ENCODE measurements at regions of chr16 and their contacts with region 1.

Region 1: DNA sequence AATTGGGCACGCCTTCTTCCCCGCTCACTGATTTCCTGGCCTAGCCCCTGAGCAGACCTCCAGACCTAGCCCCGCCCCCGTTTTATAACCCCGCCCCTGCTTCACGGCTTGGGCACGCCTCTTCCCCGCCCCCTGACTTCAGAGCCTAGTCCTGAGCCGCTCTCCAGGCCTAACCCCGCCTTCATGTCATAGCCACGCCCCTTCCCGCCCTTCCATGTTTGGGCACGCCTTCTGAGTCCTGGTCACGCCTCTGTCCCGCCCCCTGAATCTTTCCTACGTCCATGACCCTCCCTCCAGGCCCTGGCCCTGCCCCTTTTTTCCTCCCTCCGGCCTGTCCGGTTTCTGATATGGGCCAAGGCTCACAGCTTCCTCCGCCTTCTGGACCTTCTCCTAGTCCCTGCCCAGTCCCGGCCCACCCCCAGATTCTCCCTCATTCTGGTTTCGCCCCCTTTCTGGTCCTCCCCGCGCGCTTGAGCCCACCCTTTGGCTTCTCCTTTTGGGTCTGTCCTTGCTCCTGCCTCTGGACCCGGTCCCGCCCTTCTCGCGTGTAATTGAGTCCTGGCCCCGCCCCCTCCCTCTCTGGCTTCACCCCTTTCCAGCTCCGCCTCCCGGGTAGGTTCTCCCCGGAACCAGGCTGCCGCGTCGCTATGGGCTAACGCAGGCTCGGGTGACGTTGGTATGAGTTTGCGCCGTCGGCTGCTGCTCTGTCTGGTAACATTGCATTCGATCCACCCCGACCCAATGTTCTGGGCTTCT is 15.1 kb upstream of the EEF2K start:
- DNase-seq: peak; percentile 100
- ATAC-seq: peak; percentile 78
- H3K4me3 Mint-ChIP-seq: peak overlapping the region; percentile 88
- H3K27ac Mint-ChIP-seq: peak overlapping the region; percentile 98
- H3K4me1 Mint-ChIP-seq: peaks cover 38% of the 10 kb centered on the region
- H3K27me3 Mint-ChIP-seq: peaks cover 18% of the 10 kb centered on the region
- CTCF ChIP-seq: no peak

Region 2: GRCh38 chr16:21989133-21989532 is 201.8 kb before region 1 on chr16:
- CTCF ChIA-PET with region 1: interaction called, 24 read pairs
- POLR2A ChIA-PET with region 1: no interaction called
- DNase-seq: no peak
- ATAC-seq: no peak
- H3K4me3 Mint-ChIP-seq: no peak overlapping the region
- H3K27ac Mint-ChIP-seq: no peak overlapping the region
- H3K4me1 Mint-ChIP-seq: peaks cover 5% of the 10 kb centered on the region; the same call in 1 of the 2 replicates
- H3K27me3 Mint-ChIP-seq: no peaks in the 10 kb centered on the region
- CTCF ChIP-seq: no peak

Region 3: GRCh38 chr16:22007509-22008214 is 183.3 kb before region 1 on chr16 and contains the start of gene MOSMO:
- CTCF ChIA-PET with region 1: interaction called, 38 read pairs
- POLR2A ChIA-PET with region 1: interaction called, 4 read pairs
- DNase-seq: peak; percentile 66
- ATAC-seq: peak; percentile 82
- H3K4me3 Mint-ChIP-seq: peak within 1 kb of the TSS; percentile 90
- H3K27ac Mint-ChIP-seq: peak within 1 kb of the TSS; percentile 21; the same call in 1 of the 2 replicates
- H3K4me1 Mint-ChIP-seq: peaks cover 12% of the 10 kb centered on the region
- H3K27me3 Mint-ChIP-seq: peaks cover 13% of the 10 kb centered on the region
- CTCF ChIP-seq: no peak
- total RNA-seq, gene MOSMO: 10.7 to 11.6 TPM (median 10.7 TPM) in 3 replicates

Region 4: GRCh38 chr16:22091758-22092600 is 99.0 kb before region 1 on chr16 and contains the start of gene VWA3A:
- CTCF ChIA-PET with region 1: interaction called, 15 read pairs
- POLR2A ChIA-PET with region 1: no interaction called
- DNase-seq: peak; percentile 57
- ATAC-seq: peak; percentile 91
- H3K4me3 Mint-ChIP-seq: peak within 1 kb of the TSS; percentile 18; the same call in 1 of the 2 replicates
- H3K27ac Mint-ChIP-seq: peak within 1 kb of the TSS; percentile 37; the same call in 1 of the 2 replicates
- H3K4me1 Mint-ChIP-seq: peaks cover 10% of the 10 kb centered on the region
- H3K27me3 Mint-ChIP-seq: no peaks in the 10 kb centered on the region; the same call in 1 of the 2 replicates
- CTCF ChIP-seq: no peak
- total RNA-seq, gene VWA3A: 0.11 TPM in 1 of 3 replicates, not detected in the others

Region 5: DNA sequence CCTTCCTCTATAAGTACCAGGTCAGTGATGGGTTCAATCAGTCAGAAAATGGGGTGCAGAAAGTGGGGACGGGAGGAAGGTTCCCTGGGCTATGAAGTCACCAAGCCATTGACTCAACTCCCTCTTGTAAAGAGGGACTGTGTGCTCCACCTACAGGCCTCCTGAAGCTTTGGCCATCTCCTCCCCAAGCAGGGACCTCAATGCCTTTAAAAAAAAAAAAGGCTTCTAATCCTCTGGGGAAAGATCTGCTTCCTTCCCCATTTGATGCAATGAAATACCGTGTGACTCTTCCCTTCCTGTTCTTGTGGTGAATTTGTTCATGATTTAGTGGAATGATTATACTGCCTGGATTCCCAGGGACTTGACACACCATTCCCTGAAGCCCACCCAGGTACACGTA is 67.8 kb before region 1 on chr16:
- CTCF ChIA-PET with region 1: interaction called, 20 read pairs
- POLR2A ChIA-PET with region 1: no interaction called
- DNase-seq: no peak
- ATAC-seq: peak; percentile 81
- H3K4me3 Mint-ChIP-seq: no peak overlapping the region
- H3K27ac Mint-ChIP-seq: no peak overlapping the region
- H3K4me1 Mint-ChIP-seq: no peaks in the 10 kb centered on the region
- H3K27me3 Mint-ChIP-seq: peaks cover 6% of the 10 kb centered on the region; the same call in 1 of the 2 replicates
- CTCF ChIP-seq: no peak

Region 6: DNA sequence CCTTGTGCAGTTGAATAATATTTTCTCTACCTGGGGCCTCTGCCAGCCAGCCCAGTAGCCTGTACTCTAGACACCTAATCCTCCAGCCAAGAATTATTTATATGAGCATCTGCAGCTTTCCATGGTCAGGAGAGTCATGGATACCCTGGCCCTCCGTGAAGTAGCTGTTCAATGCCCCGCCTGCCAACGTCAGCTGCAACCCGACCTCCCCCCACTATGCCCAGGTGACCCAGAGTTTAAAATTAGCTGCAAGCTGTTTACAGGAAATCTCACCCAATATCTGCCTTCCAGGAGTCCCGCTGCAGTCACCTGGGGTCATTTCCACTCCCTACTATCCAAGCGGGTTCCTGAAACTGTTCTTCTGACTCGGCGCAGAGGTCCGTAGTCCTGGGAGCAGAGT is 16.3 kb before region 1 on chr16:
- CTCF ChIA-PET with region 1: interaction called, 26 read pairs
- POLR2A ChIA-PET with region 1: no interaction called
- DNase-seq: no peak
- ATAC-seq: no peak
- H3K4me3 Mint-ChIP-seq: no peak overlapping the region
- H3K27ac Mint-ChIP-seq: no peak overlapping the region
- H3K4me1 Mint-ChIP-seq: no peaks in the 10 kb centered on the region
- H3K27me3 Mint-ChIP-seq: no peaks in the 10 kb centered on the region
- CTCF ChIP-seq: no peak

Region 7: DNA sequence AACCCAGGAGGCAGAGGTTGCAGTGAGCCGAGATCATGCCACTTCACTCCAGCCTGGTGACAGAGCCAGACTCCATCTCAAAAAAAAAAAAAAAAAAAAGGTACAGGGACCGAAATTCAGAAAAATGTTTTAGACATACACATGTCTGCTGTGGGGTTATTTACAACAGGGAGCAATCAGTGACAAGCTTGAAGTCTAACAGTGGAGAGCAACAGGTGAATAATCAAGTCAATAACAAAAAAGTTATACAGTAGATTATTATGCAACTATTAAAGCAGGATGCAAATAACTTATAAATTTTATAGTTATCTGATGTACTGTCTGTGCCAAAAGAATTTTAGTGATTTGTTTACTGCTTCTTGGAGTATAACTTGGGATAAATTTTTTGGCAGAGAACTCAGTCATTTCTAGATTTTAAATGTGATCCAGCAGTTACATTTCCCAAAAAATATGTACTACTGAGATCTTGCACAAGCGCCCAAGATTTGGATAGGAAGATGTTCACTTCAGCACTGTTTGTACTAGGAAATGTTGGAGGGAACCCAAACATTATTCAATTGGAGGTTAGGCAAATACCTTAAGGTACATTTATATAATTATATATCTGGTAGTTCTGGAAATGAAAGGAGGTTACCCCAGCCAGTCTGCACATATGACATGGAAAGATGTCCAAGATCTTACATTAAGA is 49.2 kb after region 1 on chr16:
- CTCF ChIA-PET with region 1: no interaction called
- POLR2A ChIA-PET with region 1: no interaction called
- DNase-seq: no peak
- ATAC-seq: no peak
- H3K4me3 Mint-ChIP-seq: no peak overlapping the region
- H3K27ac Mint-ChIP-seq: no peak overlapping the region
- H3K4me1 Mint-ChIP-seq: no peaks in the 10 kb centered on the region
- H3K27me3 Mint-ChIP-seq: no peaks in the 10 kb centered on the region
- CTCF ChIP-seq: no peak

Region 8: DNA sequence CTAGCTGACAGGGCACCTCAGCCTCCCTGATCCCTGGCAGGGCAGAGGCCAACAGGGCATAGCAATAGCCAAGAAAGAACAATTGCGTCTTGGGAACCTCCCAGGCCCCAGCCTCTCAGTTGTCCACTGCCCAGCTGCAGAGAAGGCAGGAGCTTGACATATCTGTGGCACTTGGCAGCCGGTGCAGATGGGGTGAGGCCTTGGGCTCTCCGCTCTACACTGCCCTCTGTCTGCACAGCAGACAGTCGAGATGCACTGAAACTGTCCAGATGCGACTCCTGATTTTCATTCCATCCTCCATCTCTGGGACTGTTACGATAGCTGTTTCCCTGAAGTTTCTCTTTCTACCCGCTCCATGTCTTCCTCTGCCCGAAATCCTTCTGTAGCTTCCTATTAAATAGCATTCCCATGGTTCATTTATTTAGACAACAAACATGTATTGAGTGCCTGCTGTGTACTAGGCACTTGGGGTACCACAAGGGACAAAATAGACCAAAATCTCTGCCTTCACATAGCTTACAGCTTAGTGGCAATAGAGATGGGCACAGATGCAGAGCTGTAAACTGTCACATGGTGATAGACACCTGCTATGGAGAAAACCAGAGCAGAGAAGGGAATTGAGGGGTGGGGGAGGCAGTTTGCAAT is 109.6 kb after region 1 on chr16:
- CTCF ChIA-PET with region 1: interaction called, 14 read pairs
- POLR2A ChIA-PET with region 1: interaction called, 3 read pairs
- DNase-seq: peak; percentile 57
- ATAC-seq: peak; percentile 14
- H3K4me3 Mint-ChIP-seq: peak overlapping the region; percentile 26; the same call in 1 of the 2 replicates
- H3K27ac Mint-ChIP-seq: peak overlapping the region; percentile 76
- H3K4me1 Mint-ChIP-seq: peaks cover 26% of the 10 kb centered on the region
- H3K27me3 Mint-ChIP-seq: no peaks in the 10 kb centered on the region
- CTCF ChIP-seq: peak; percentile 31; the same call in 1 of the 2 replicates

Region 9: DNA sequence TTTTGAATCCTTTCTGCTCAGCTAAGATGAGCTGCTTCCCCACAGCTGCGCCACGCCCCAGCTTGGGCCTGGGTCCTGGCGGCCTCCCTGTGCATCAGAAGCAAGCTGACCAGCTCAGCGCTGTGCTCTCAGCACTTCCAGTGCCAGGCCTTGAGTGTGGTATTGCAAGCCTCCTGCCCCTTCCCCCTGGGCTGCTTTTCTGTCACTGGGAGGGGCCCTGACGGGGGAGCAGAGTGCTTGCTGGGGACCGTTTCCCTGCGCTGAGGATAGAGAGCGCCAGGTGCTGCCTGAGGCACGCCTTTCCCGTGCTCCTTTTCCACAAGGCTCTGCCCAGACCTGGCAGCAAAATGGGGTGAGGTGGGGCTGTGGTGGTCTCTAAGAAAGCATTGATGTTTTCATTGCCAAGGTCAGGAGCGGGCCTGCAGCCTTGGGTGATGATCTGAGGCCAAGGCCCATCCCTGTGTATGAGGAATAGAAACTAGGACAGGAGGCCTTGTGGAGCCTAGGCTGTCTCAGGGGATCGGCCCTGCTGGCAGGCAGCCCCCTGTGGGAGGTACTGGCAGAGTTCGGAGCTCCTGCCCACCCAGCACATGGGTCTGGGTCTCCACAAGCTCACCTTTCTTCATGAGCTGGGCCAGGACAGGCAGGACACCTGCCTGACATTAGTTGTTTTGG is 136.0 kb after region 1 on chr16:
- CTCF ChIA-PET with region 1: no interaction called
- POLR2A ChIA-PET with region 1: no interaction called
- DNase-seq: no peak
- ATAC-seq: no peak
- H3K4me3 Mint-ChIP-seq: no peak overlapping the region
- H3K27ac Mint-ChIP-seq: no peak overlapping the region
- H3K4me1 Mint-ChIP-seq: no peaks in the 10 kb centered on the region
- H3K27me3 Mint-ChIP-seq: no peaks in the 10 kb centered on the region
- CTCF ChIP-seq: no peak

Measured in WTC11 (cell line).